ENCODE measurements at regions of chr19 and their contacts with region 1.

Region 1: DNA sequence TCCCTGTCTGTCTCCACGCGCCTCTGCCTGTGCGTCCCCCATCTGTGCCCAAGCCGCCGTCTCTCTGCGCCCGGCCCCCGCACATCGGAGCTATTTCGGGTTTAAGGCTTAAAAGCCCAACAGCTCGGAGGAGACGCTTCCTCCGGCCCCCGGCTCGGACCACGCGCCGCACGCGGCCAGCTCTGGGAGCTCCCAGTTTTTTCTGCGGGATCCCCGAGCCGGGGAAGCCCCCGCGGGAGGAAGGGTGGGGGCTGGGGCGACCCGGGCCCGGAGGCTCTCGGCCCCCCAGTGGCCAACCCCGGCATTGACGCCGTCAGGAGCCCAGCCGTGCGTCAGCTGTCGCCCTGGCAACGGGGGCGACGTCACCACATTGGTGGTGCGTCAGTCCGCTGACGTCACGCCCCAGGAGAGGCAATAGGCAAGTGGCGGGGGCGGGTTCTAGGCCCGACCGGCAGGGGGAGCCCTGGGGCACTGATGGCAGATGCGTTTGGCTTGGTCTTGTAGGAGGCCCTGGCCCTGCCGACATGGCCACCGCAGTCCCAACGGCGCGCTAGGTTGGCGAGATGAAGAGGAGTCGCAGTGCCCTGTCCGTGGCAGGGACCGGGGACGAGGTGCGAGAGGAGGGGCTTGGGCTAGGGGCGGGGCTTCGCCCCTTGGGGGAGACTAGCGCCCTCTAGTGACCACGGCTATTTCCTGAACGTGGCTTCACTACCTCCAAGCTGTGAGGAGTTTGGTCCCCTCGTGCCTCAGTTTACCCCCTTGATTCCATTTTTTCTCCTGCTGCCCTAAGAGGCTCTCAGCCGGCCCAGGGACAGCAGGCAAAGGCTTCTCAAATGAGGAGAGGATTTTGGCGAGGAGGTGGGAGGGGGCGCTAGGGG is 3.7 kb upstream of the PDE4A start:
- DNase-seq: peak; percentile 89
- ATAC-seq: peak; percentile 56
- H3K4me3 ChIP-seq: peak overlapping the region; percentile 51 to 58
- H3K27ac ChIP-seq: peak overlapping the region; percentile 89
- H3K4me1 ChIP-seq: peaks cover 25 to 56% of the 10 kb centered on the region in 2 experiments
- H3K27me3 ChIP-seq: no peaks in the 10 kb centered on the region
- CTCF ChIP-seq: peak; percentile 80 to 99 (median 92)
- POLR2A ChIP-seq: no peak
- RAD21 ChIP-seq: no peak

Region 2: GRCh38 chr19:10403137-10404021 is 13.2 kb before region 1 on chr19 and contains the start of gene CDC37:
- CTCF ChIA-PET with region 1: interaction called, 60 read pairs
- POLR2A ChIA-PET with region 1: interaction called, 7 read pairs
- RAD21 ChIA-PET with region 1: no interaction called
- intact Hi-C with region 1: no loop called
- DNase-seq: peak; percentile 93
- ATAC-seq: peak; percentile 84
- H3K4me3 ChIP-seq: peak within 1 kb of the TSS; percentile 94 to 100
- H3K27ac ChIP-seq: peak within 1 kb of the TSS; percentile 79
- H3K4me1 ChIP-seq: peaks cover 11 to 36% of the 10 kb centered on the region in 2 experiments
- H3K27me3 ChIP-seq: no peaks in the 10 kb centered on the region
- CTCF ChIP-seq: no peak
- POLR2A ChIP-seq: peak; percentile 47
- RAD21 ChIP-seq: no peak
- total RNA-seq, gene CDC37: 260 TPM

Region 3: DNA sequence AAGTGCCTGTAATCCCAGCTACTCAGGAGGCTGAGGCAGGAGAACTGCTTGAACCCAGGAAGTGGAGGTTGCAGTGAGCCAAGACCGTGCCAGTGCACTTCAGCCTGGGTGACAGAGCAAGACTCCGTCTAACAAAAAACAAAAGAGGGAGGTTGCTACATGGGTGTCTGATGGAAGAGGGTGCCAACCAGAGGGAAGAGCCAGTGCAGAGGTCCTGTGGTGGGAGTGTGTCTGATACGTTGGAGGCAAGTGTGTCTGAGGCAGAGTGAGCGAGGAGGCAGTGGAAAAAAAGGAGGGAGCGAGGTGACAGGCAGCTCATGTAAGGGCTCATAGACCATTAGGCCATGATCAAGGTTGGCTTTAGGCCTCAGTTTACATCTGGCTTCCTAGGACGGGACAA is 10.6 kb after region 1 on chr19:
- CTCF ChIA-PET with region 1: interaction called, 30 read pairs
- POLR2A ChIA-PET with region 1: interaction called, 3 read pairs
- RAD21 ChIA-PET with region 1: no interaction called
- intact Hi-C with region 1: no loop called
- DNase-seq: no peak
- ATAC-seq: no peak
- H3K4me3 ChIP-seq: no peak overlapping the region
- H3K27ac ChIP-seq: no peak overlapping the region
- H3K4me1 ChIP-seq: peaks cover 13 to 44% of the 10 kb centered on the region in 2 experiments
- H3K27me3 ChIP-seq: no peaks in the 10 kb centered on the region
- CTCF ChIP-seq: no peak
- POLR2A ChIP-seq: no peak
- RAD21 ChIP-seq: no peak

Region 4: DNA sequence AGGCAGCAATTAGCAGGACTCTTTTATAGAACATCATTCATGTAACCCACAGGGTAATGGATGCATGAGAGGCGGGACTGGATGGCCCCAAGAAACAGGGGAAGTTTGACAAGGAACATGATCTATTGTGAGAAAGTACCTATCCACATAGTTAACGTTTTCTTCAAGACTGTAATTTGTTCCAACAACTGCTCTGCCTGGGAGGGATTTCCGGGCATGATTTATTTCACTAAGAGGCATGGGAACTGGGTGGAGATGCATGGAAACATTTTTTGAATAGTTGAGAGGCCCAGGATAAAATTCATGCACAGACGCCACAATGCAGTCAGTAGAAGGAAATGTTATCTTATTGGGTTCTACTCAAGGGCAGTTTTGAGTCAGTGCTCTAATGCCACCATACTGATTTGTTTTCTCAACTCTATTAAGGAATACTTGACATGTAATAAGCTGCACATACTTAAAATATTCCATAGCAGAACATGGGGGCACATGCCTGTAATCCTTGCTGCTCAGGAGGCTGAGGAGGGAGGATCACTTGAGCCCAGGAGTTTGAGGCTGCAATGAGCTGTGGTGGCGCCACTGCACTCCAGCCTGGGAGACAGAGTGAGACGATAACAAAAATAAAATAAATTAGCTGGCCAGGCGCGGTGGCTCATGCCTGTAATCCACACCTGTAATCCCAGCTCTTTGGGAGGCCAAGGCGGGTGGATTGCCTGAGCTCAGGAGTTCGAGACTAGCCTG is 117.2 kb after region 1 on chr19:
- CTCF ChIA-PET with region 1: no interaction called
- POLR2A ChIA-PET with region 1: no interaction called
- RAD21 ChIA-PET with region 1: no interaction called
- intact Hi-C with region 1: no loop called
- DNase-seq: no peak
- ATAC-seq: no peak
- H3K4me3 ChIP-seq: no peak overlapping the region
- H3K27ac ChIP-seq: no peak overlapping the region
- H3K4me1 ChIP-seq: no peaks in the 10 kb centered on the region
- H3K27me3 ChIP-seq: no peaks in the 10 kb centered on the region
- CTCF ChIP-seq: no peak
- POLR2A ChIP-seq: no peak
- RAD21 ChIP-seq: no peak

Measured in HCT116 (cell line).